WTC11 (cell line): ENCODE measurements at regions of chr17 and their contacts with region 1.

Region 1: DNA sequence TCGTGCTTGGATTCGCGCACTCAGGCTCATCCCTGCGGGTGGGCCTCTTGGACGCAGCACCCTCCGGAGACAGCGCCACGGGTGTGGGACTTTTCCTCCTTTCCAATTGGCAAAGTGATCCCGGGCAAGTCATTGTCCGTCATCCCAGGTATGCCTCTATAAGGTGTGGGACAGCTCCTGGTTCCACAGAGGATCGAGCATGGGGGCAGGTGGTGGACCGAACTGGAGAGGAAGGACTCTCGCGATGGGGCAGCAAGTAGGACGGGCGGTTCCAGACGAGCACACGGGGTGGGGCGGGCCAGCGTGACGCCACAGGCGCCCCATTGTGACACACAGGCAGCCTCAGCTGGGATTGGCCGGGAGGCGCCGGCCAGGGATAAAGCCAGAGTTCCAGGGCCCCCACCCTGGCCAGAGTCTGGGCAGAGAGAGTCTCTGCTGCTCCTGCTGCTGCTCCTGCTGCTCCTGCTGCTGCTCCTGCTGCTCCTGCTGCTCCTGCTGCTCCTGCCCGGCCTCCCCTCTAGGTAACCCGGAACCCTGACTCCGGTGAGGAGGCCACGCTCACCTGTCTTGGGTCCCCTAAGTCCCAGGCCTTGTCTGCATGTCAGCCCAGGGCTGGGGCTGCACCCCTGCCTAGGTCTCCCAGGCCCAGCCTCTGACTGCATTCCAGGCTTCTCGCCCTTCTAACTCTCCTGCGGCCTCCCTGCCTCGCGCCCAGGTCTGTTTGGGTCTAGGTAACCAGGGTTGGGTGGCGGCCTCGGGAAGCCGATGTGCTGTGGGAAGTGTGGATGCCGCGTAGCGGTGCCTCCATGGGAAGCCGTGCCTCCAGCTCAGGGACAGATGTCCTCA is 38.5 kb upstream of the SLC47A1 start:
- DNase-seq: no peak
- ATAC-seq: no peak
- H3K4me3 Mint-ChIP-seq: no peak overlapping the region
- H3K27ac Mint-ChIP-seq: peak overlapping the region; percentile 31; the same call in 1 of the 2 replicates
- H3K4me1 Mint-ChIP-seq: peaks cover 39% of the 10 kb centered on the region
- H3K27me3 Mint-ChIP-seq: no peaks in the 10 kb centered on the region
- CTCF ChIP-seq: no peak

Region 2: GRCh38 chr17:19354748-19355147 is 140.4 kb before region 1 on chr17:
- CTCF ChIA-PET with region 1: no interaction called
- POLR2A ChIA-PET with region 1: no interaction called
- DNase-seq: no peak
- ATAC-seq: no peak
- H3K4me3 Mint-ChIP-seq: no peak overlapping the region
- H3K27ac Mint-ChIP-seq: no peak overlapping the region
- H3K4me1 Mint-ChIP-seq: no peaks in the 10 kb centered on the region
- H3K27me3 Mint-ChIP-seq: no peaks in the 10 kb centered on the region
- CTCF ChIP-seq: no peak

Region 3: GRCh38 chr17:19369107-19369778 is 125.9 kb before region 1 on chr17:
- CTCF ChIA-PET with region 1: no interaction called
- POLR2A ChIA-PET with region 1: no interaction called
- DNase-seq: no peak
- ATAC-seq: no peak
- H3K4me3 Mint-ChIP-seq: no peak overlapping the region
- H3K27ac Mint-ChIP-seq: no peak overlapping the region; the same call in 1 of the 2 replicates
- H3K4me1 Mint-ChIP-seq: peaks cover 3% of the 10 kb centered on the region
- H3K27me3 Mint-ChIP-seq: no peaks in the 10 kb centered on the region
- CTCF ChIP-seq: no peak

Region 4: DNA sequence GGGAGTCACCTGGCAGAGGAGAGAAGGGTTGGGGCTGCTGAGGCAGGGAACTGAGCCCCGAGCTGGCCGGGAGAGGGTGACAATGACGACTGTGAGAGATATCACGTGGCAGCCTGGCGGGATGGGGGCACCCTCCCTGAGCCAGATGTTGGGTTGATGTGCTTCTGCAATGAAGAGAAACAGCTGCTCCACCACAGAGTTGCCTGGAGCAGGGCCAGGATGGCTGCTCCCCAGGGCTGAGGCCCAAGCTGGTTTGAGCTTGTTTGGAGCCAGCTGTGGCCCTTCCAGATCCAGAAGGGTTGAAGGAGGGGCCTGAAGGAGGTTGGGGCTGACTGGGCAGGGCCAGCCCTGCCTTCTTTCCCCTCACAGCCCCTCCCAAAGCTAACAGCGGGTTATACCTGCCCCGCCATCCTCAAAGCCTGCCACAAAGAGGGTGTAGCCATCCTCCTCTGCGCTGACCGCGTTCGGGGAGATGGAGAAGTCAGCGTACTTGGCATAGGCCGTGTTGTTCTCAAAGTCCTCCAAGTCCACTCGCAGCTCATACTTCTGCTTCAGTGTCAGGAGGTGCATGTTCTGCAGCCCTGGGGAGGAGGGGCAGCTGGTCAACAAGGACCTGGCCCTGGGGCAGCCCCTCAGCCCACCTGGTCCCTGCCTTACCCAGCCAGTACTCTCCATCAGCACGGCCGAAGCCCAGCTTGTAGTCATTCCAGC is 110.3 kb before region 1 on chr17:
- CTCF ChIA-PET with region 1: no interaction called
- POLR2A ChIA-PET with region 1: interaction called, 10 read pairs
- DNase-seq: no peak
- ATAC-seq: no peak
- H3K4me3 Mint-ChIP-seq: no peak overlapping the region
- H3K27ac Mint-ChIP-seq: peak overlapping the region; percentile 88
- H3K4me1 Mint-ChIP-seq: peaks cover 34% of the 10 kb centered on the region
- H3K27me3 Mint-ChIP-seq: no peaks in the 10 kb centered on the region; the same call in 1 of the 2 replicates
- CTCF ChIP-seq: no peak

Region 5: GRCh38 chr17:19614900-19615299 is 119.7 kb after region 1 on chr17:
- CTCF ChIA-PET with region 1: no interaction called
- POLR2A ChIA-PET with region 1: no interaction called
- DNase-seq: no peak
- ATAC-seq: no peak
- H3K4me3 Mint-ChIP-seq: no peak overlapping the region
- H3K27ac Mint-ChIP-seq: no peak overlapping the region
- H3K4me1 Mint-ChIP-seq: no peaks in the 10 kb centered on the region
- H3K27me3 Mint-ChIP-seq: peaks cover 6% of the 10 kb centered on the region; the same call in 1 of the 2 replicates
- CTCF ChIP-seq: no peak